ENCODE measurements at regions of chr5 and their contacts with region 1.

Region 1: GRCh38 chr5:59126708-59127573 is 544.1 kb downstream of the RAB3C start:
- DNase-seq: no peak
- H3K4me3 ChIP-seq: peak overlapping the region in 6 of 7 experiments; percentile 29 to 81 (median 62)
- H3K27ac ChIP-seq: peak overlapping the region; percentile 65 to 81
- H3K4me1 ChIP-seq: peaks cover 14 to 51% (median 16%) of the 10 kb centered on the region in 4 experiments
- H3K27me3 ChIP-seq: no peaks in the 10 kb centered on the region

Region 2: GRCh38 chr5:59039296-59040023 is 87.5 kb before region 1 on chr5:
- CTCF ChIA-PET with region 1: interaction called, 8 read pairs
- POLR2A ChIA-PET with region 1: interaction called, 15 read pairs
- DNase-seq: peak; percentile 93 to 97 (median 96)
- H3K4me3 ChIP-seq: peak overlapping the region; percentile 80 to 98 (median 94)
- H3K27ac ChIP-seq: peak overlapping the region; percentile 85 to 90
- H3K4me1 ChIP-seq: peaks cover 35 to 70% (median 52%) of the 10 kb centered on the region in 4 experiments
- H3K27me3 ChIP-seq: no peaks in the 10 kb centered on the region

Measured in common myeloid progenitor, CD34-positive (primary cell).